ENCODE measurements at regions of chr10 and their contacts with region 1.

Region 1: DNA sequence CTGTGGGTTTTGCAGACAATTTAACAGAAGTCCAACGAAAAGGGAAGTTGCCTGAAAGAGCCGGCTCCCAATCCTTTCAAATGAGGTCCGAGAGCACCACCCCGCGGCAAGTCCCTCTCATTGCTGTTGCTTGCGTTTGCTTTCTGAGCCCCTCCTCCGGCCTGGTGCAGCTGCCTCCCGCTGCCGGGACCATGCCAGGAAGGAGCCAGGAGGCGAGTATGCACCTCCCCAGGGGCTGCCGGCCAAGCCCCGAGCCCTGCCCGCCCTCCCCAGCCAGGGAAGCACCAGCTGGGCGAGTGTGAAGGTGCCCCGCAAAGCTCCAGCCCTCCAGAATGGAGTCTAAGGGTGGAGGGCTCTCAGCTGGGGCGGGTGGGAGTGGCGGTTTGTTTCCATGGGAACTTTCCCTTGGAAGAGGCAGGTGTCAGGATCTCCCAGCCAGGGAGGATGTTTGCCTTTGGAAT is 25.8 kb upstream of the PPP2R2D start:
- DNase-seq: peak; percentile 82
- ATAC-seq: peak; percentile 73

Region 2: GRCh38 chr10:130190055-130190736 is 1684.8 kb before region 1 on chr10:
- intact Hi-C with region 1: loop called (anchors 5 kb)
- DNase-seq: peak; percentile 94
- ATAC-seq: peak; percentile 94

Region 3: DNA sequence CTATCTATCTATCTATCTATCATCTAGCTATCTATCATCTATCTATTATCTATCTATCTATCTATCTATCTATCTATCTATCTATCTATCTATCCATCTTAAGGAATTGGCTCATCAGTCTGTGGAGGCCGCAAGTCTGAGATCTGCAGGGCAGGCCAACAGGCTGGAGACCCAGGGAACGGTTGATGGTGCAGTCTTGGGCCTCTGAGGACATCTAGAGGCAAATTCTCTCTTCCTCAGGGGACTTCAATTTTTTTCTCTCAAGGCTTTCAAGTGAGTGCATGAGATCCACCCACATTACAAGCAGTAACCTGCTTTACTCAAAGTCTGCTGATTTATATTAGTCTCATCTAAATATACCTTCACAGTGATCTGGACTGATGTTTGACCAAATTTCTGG is 1541.8 kb before region 1 on chr10:
- intact Hi-C with region 1: loop called (anchors 10 kb)
- DNase-seq: no peak
- ATAC-seq: no peak

Region 4: DNA sequence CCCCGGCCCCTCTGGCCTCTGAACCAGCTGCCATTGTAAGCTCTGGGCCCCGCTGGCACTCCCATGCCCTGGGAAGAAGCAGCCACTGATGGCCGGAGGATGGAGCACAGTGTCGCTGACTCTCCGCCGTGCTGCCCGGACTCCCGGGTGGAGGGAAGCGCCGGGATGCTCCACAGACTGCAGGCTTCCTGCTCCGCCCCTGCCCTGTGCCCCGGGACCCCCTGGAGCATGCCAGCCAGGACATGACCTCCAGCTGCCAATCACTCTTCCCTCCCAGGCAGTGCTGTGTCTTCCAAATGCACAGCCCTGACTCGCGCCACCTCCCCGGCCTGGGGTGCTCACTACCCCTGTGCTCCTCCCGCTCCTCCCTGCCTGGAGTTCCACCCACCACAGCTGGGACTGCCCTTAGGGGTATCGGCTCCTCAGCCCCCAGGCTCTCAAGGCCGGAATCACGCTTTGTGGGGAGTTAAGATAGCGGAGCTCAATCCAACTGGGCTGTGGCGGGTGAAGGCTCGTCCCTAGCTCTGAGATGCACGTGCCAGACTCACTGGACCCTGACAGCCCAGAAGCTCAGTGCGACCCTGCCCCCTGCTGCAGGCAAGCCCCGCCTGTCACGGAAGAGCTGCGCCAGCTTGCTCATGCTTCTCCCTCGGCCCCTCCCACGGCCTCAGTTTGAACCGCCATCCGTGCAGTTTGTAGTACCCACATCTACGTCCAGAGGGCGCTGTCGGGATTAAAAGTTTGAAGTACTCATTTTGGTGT is 421.2 kb before region 1 on chr10:
- intact Hi-C with region 1: loop called (anchors 10 kb)
- DNase-seq: no peak
- ATAC-seq: peak; percentile 53

Region 5: DNA sequence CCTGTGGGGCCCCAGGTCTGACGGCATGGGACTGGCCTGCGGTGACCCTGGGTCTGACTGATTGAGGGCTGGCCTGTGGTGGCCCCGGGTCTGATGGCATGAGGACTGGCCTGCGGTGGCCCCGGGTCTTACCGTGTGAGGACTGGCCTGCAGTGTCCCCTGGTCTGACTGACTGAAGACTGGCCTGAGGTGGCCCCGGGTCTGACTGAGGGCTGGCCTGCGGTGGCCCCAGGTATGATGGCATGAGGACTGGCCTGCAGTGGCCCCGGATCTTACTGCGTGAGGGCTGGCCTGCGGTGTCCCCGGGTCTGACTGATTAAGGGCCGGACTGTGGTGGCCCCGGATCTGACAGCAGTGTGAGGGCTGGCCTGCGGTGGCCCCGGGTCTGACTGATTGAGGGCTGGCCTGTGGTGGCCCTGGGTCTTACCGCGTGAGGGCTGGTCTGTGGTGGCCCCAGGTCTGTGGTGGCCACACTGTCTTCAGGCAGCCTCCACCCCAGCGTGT is 201.6 kb after region 1 on chr10:
- intact Hi-C with region 1: no loop called
- DNase-seq: peak; percentile 53
- ATAC-seq: peak; percentile 23

Measured in Right ventricle myocardium inferior (tissue), 1 donor.